Breast epithelium (tissue), 4 donors: ENCODE measurements at regions of chr4 and their contacts with region 1.

Region 1: GRCh38 chr4:142238589-142238988 is 602.2 kb downstream of the IL15 start:
- DNase-seq: no peak
- H3K4me3 ChIP-seq: no peak overlapping the region
- H3K27ac ChIP-seq: no peak overlapping the region
- H3K4me1 ChIP-seq: no peaks in the 10 kb centered on the region
- H3K27me3 ChIP-seq: no peaks in the 10 kb centered on the region
- CTCF ChIP-seq: no peak
- POLR2A ChIP-seq: no peak

Region 2: DNA sequence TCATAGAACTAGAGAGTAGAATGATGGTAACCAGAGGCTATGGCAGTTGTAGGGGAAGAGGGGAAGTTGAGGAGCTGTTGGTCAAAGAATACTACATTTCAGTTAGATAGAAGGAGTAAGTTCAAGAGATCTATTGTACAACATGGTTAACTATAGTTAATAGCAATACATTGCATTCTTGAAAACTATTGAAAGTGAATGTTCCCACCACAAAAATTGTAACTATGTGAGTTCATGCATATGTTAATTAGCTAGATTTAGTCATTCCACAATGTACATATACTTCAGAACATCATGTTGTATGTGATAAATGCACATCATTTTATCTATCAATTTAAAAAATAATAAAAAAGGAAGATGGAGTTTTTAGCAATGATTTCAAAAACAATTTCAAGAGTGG is 727.5 kb before region 1 on chr4:
- intact Hi-C with region 1: no loop called
- DNase-seq: no peak
- H3K4me3 ChIP-seq: no peak overlapping the region
- H3K27ac ChIP-seq: no peak overlapping the region
- H3K4me1 ChIP-seq: no peaks in the 10 kb centered on the region
- H3K27me3 ChIP-seq: no peaks in the 10 kb centered on the region
- CTCF ChIP-seq: no peak
- POLR2A ChIP-seq: no peak

Region 3: DNA sequence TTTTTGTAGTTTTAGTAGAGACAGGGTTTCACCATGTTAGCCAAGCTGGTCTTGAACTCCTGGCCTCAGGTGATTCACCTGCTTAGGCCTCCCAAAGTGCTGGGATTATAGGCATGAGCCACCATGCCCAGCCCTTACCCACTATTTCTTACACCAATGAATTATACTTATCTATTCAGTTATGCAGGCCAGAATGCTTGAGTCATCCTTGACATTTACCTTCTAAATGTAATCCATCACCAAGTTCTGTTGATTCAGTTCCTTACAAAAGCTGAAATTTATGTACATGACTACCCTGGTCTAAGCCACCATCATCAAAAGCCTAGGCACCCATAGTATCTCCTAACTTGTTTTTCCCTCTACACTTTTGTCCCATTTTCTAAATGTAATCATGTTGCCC is 16.5 kb before region 1 on chr4:
- intact Hi-C with region 1: loop called (anchors 1 kb)
- DNase-seq: no peak
- H3K4me3 ChIP-seq: no peak overlapping the region
- H3K27ac ChIP-seq: no peak overlapping the region
- H3K4me1 ChIP-seq: no peaks in the 10 kb centered on the region
- H3K27me3 ChIP-seq: no peaks in the 10 kb centered on the region
- CTCF ChIP-seq: no peak
- POLR2A ChIP-seq: no peak